ENCODE measurements at regions of chr3 and their contacts with region 1.

Region 1: GRCh38 chr3:13173186-13173585 is 100.0 kb upstream of the IQSEC1 start:
- DNase-seq: no peak
- H3K4me3 ChIP-seq: no peak overlapping the region
- H3K27ac ChIP-seq: no peak overlapping the region
- H3K4me1 ChIP-seq: no peaks in the 10 kb centered on the region
- H3K27me3 ChIP-seq: no peaks in the 10 kb centered on the region
- CTCF ChIP-seq: no peak
- POLR2A ChIP-seq: no peak

Region 2: GRCh38 chr3:12807066-12807465 is 366.1 kb before region 1 on chr3:
- intact Hi-C with region 1: loop called (anchors 5 kb)
- DNase-seq: no peak
- H3K4me3 ChIP-seq: no peak overlapping the region
- H3K27ac ChIP-seq: no peak overlapping the region
- H3K4me1 ChIP-seq: no peaks in the 10 kb centered on the region
- H3K27me3 ChIP-seq: no peaks in the 10 kb centered on the region
- CTCF ChIP-seq: no peak
- POLR2A ChIP-seq: no peak

Region 3: GRCh38 chr3:13135251-13135810 is 37.9 kb before region 1 on chr3:
- intact Hi-C with region 1: no loop called
- DNase-seq: peak in 1 of 2 donors; percentile 35
- H3K4me3 ChIP-seq: no peak overlapping the region
- H3K27ac ChIP-seq: no peak overlapping the region
- H3K4me1 ChIP-seq: no peaks in the 10 kb centered on the region
- H3K27me3 ChIP-seq: no peaks in the 10 kb centered on the region
- CTCF ChIP-seq: no peak
- POLR2A ChIP-seq: no peak

Region 4: GRCh38 chr3:13197795-13198194 is 24.6 kb after region 1 on chr3:
- intact Hi-C with region 1: loop called (anchors 1 kb)
- DNase-seq: no peak
- H3K4me3 ChIP-seq: no peak overlapping the region
- H3K27ac ChIP-seq: no peak overlapping the region
- H3K4me1 ChIP-seq: no peaks in the 10 kb centered on the region
- H3K27me3 ChIP-seq: no peaks in the 10 kb centered on the region
- CTCF ChIP-seq: no peak
- POLR2A ChIP-seq: no peak

Region 5: GRCh38 chr3:13229273-13229949 is 56.2 kb after region 1 on chr3:
- intact Hi-C with region 1: no loop called
- DNase-seq: no peak
- H3K4me3 ChIP-seq: no peak overlapping the region
- H3K27ac ChIP-seq: no peak overlapping the region
- H3K4me1 ChIP-seq: no peaks in the 10 kb centered on the region
- H3K27me3 ChIP-seq: peaks cover 0 to 9% of the 10 kb centered on the region in 2 donors
- CTCF ChIP-seq: no peak
- POLR2A ChIP-seq: no peak

Measured in breast epithelium (tissue), 4 donors.